Vagina (tissue), 2 donors: ENCODE measurements at regions of chr9 and their contacts with region 1.

Region 1: DNA sequence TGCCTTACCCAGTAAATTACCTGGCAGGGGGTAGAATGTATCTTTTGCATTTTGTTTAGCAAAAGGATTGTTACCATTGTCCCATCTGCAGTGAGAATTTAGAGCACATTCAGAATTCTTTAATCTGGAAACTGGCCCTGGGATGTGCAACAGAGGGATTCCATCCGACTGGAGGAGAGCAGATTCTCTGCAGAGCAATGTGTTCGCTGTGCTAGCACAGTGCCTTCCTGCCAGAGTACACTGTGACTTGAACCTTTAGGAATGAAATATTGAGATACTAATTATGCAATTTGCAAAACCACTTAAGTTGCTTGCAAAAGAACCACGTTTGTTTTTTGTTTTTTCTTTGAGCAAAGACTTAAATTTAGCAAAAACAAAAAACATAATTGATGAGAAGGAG is 22.5 kb upstream of the DMRT1 start:
- DNase-seq: no peak
- H3K4me3 ChIP-seq: no peak overlapping the region
- H3K27ac ChIP-seq: no peak overlapping the region
- H3K4me1 ChIP-seq: no peaks in the 10 kb centered on the region
- H3K27me3 ChIP-seq: no peaks in the 10 kb centered on the region
- CTCF ChIP-seq: no peak
- POLR2A ChIP-seq: no peak

Region 2: GRCh38 chr9:841371-842209 is 22.6 kb after region 1 on chr9 and contains the start of gene DMRT1:
- intact Hi-C with region 1: loop called (anchors 2 kb)
- DNase-seq: no peak
- H3K4me3 ChIP-seq: no peak within 1 kb of the TSS
- H3K27ac ChIP-seq: no peak within 1 kb of the TSS
- H3K4me1 ChIP-seq: peaks cover 7% of the 10 kb centered on the region
- H3K27me3 ChIP-seq: no peaks in the 10 kb centered on the region
- CTCF ChIP-seq: no peak
- POLR2A ChIP-seq: no peak
- total RNA-seq, gene DMRT1: not detected

Region 3: DNA sequence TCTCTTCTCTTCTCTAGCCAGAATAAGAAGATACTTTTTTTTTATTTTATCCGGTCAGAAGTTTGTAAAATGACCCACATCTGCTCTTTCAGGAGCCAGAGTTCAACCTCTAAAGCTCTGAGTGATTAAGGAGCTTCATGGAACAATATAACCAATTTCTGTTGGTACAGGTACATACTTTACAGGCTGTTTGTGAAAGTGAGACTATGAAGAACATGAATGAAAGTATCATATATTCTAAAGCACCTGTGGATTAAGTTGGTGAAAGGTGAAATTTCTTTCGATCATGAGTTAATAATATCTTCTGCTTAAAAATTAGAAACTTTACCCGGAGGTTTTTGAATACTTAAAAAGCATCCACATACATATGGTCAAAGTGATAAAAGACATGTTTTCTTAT is 296.4 kb after region 1 on chr9:
- intact Hi-C with region 1: no loop called
- DNase-seq: no peak
- H3K4me3 ChIP-seq: no peak overlapping the region
- H3K27ac ChIP-seq: no peak overlapping the region
- H3K4me1 ChIP-seq: no peaks in the 10 kb centered on the region
- H3K27me3 ChIP-seq: no peaks in the 10 kb centered on the region
- CTCF ChIP-seq: no peak
- POLR2A ChIP-seq: no peak